Esophagus squamous epithelium (tissue), 5 donors: ENCODE measurements at regions of chr11 and their contacts with region 1.

Region 1: GRCh38 chr11:2885676-2886081 is at the start of gene CDKN1C:
- DNase-seq: no peak
- H3K4me3 ChIP-seq: peak within 1 kb of the TSS; percentile 60 to 91 (median 74)
- H3K27ac ChIP-seq: peak within 1 kb of the TSS; percentile 74 to 90 (median 84)
- H3K4me1 ChIP-seq: peaks cover 16 to 69% (median 21%) of the 10 kb centered on the region in 3 donors
- H3K27me3 ChIP-seq: peaks cover 0 to 32% (median 0%) of the 10 kb centered on the region in 4 donors
- CTCF ChIP-seq: peak in 2 of 6 experiments; percentile 15
- POLR2A ChIP-seq: peak in 3 of 4 donors; percentile 13 to 96 (median 90)
- total RNA-seq, gene CDKN1C: 4.1 to 54.6 (median 20.8) TPM

Region 2: GRCh38 chr11:2428322-2428795 is 457.3 kb before region 1 on chr11:
- intact Hi-C with region 1: loop called (anchors 5 kb)
- DNase-seq: no peak
- H3K4me3 ChIP-seq: no peak overlapping the region
- H3K27ac ChIP-seq: no peak overlapping the region
- H3K4me1 ChIP-seq: peaks cover 0 to 8% (median 0%) of the 10 kb centered on the region in 3 donors
- H3K27me3 ChIP-seq: peaks cover 0 to 19% (median 0%) of the 10 kb centered on the region in 4 donors
- CTCF ChIP-seq: peak; percentile 84 to 96 (median 95)
- POLR2A ChIP-seq: no peak

Region 3: DNA sequence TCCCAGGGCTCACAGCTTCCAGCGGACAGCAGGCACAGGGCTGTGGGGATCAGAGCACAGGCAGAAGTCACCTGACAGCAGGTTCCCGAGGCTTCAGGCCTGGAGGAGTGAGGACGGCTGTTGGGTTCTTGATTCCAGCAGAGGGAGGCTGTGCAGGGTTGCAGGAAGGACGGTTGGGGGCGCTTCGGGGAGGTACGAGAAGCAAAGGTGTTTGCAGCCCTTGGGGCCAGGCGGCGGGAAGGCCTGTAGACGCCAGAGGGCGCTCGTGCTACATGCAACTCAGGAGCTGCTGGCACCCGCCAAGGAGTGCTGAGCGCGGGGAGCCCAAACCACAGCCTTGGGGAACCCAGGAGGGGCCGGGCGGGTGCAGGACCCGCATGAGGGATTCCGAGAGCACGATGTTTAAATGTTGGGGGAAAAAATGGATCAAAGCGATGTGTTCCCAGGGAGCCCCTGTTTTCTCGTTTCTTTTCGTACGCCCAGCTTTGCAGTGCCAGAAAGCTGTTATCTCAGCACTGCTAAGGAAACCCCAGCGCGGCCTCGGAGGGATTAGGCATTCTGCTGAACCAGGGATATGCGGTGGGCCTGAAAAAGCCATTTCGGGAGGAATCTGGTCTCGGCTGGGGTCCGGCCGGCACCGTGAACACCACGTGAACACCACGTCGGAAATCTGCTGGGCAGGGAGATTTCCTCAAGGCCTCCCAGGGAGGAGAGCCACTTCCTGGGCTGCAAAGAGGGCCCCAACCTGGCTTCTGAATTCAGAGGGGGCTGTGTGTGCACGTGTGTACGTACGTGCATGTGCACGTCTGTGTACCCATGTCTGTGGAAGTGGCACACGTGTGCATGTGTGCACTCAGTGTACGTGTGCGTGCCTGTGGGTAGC is 352.7 kb before region 1 on chr11:
- intact Hi-C with region 1: loop called (anchors 2 kb)
- DNase-seq: peak; percentile 49
- H3K4me3 ChIP-seq: peak overlapping the region in 3 of 4 donors; percentile 21 to 51 (median 25)
- H3K27ac ChIP-seq: peak overlapping the region in 3 of 4 donors; percentile 21 to 62 (median 52)
- H3K4me1 ChIP-seq: peaks cover 7 to 20% (median 10%) of the 10 kb centered on the region in 3 donors
- H3K27me3 ChIP-seq: no peaks in the 10 kb centered on the region
- CTCF ChIP-seq: peak; percentile 99
- POLR2A ChIP-seq: no peak

Region 4: DNA sequence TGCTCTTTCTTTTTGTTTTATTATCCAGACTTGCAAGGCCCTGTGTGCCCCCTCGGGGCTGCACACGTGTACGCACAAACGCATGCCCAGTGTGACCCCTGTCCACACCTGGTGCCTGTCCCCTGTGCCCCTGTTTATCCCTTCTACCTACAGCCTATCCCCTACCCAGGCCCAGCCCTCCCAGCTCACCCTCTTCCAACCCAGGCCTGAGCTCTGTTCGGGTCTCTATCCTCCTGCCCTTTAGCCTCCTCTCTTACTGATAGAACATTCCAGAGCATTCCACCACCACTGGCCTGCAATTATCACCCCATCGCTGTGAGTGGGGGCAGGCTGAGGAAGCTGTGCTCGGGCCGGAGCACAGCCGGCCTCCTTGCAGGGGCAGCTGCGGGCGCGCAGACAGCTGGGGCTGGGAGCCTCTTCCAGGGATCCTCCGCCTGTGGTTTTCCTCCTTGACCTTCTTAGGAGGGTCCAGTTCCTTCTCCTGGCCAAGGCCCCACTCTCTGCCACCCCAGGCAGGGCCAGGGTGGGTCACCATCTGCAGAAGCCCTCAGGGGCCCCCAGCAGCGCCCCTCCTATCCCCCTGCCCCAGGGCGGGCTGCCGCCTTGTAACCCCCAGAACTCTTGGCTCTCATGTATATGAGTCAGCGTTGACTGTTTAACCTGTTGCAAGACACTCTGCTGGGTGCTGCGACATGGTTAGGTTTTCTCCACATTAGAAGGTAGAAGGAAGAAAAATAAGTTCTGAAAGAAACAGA is 144.1 kb before region 1 on chr11:
- intact Hi-C with region 1: no loop called
- DNase-seq: no peak
- H3K4me3 ChIP-seq: peak overlapping the region in 1 of 4 donors; percentile 6
- H3K27ac ChIP-seq: peak overlapping the region in 3 of 4 donors; percentile 50 to 65 (median 60)
- H3K4me1 ChIP-seq: peaks cover 0 to 18% (median 0%) of the 10 kb centered on the region in 3 donors
- H3K27me3 ChIP-seq: no peaks in the 10 kb centered on the region
- CTCF ChIP-seq: no peak
- POLR2A ChIP-seq: no peak

Region 5: DNA sequence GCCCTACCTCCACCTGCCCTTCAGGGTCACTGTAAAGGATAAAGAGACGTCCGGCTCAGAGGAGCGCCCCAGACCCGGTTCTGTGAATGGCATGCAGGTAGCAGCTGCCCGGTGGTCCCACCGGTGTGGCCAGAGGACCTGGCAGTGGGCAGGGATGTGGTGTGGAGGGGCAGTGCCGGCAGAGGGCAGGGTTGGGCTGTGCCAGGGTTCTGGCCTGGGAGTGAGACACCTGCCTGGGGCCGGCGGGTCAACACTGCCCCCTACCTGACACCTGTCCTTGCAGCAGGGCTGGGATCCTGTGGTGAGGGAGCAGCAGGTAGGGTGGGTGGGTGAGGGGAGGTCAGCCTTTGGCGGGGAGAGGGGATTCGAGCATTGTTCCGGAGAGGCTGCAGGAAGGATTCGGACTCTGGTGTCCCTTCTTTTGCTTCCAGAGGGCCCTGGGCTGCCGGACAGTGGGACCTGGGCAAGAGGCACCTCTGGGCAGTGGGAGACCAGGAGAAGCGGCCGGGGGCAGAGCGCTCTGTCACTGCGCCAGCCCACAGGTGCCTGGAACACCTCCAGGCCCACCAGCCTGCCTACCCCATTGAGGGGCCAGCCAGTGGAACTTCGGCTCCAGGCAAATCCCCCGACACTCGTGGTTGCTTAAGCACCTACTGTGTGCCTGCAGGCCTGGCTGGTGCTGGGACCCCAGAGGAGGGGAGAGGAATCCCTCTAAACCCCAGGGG is 45.2 kb after region 1 on chr11:
- intact Hi-C with region 1: no loop called
- DNase-seq: no peak
- H3K4me3 ChIP-seq: peak overlapping the region; percentile 50 to 79 (median 69)
- H3K27ac ChIP-seq: peak overlapping the region; percentile 81 to 93 (median 88)
- H3K4me1 ChIP-seq: peaks cover 33 to 67% (median 35%) of the 10 kb centered on the region in 3 donors
- H3K27me3 ChIP-seq: peaks cover 0 to 37% (median 0%) of the 10 kb centered on the region in 4 donors
- CTCF ChIP-seq: peak; percentile 57 to 90 (median 72)
- POLR2A ChIP-seq: no peak